Ascending aorta (tissue), 2 donors: ENCODE measurements at regions of chr15 and their contacts with region 1.

Region 1: GRCh38 chr15:58749532-58750337 is at the start of gene ADAM10:
- DNase-seq: peak; percentile 97 to 99
- H3K4me3 ChIP-seq: peak within 1 kb of the TSS; percentile 94 to 97
- H3K27ac ChIP-seq: peak within 1 kb of the TSS; percentile 98
- H3K4me1 ChIP-seq: peaks cover 0 to 13% of the 10 kb centered on the region in 2 donors
- H3K27me3 ChIP-seq: no peaks in the 10 kb centered on the region
- CTCF ChIP-seq: no peak
- total RNA-seq, gene ADAM10: 44.6 TPM

Region 2: GRCh38 chr15:57706405-57707209 is 1043.1 kb before region 1 on chr15 and contains the start of gene POLR2M:
- intact Hi-C with region 1: loop called (anchors 10 kb)
- DNase-seq: peak; percentile 89 to 99
- H3K4me3 ChIP-seq: peak within 1 kb of the TSS; percentile 77 to 87
- H3K27ac ChIP-seq: peak within 1 kb of the TSS; percentile 96 to 97
- H3K4me1 ChIP-seq: peaks cover 0 to 26% of the 10 kb centered on the region in 2 donors
- H3K27me3 ChIP-seq: no peaks in the 10 kb centered on the region
- CTCF ChIP-seq: no peak
- total RNA-seq, gene POLR2M: 24.9 TPM

Region 3: GRCh38 chr15:58331903-58332675 is 417.6 kb before region 1 on chr15:
- intact Hi-C with region 1: loop called (anchors 1 kb)
- DNase-seq: peak; percentile 91 to 98
- H3K4me3 ChIP-seq: peak overlapping the region in 1 of 2 donors; percentile 27
- H3K27ac ChIP-seq: peak overlapping the region; percentile 84 to 86
- H3K4me1 ChIP-seq: peaks cover 9 to 29% of the 10 kb centered on the region in 2 donors
- H3K27me3 ChIP-seq: no peaks in the 10 kb centered on the region
- CTCF ChIP-seq: no peak

Region 4: DNA sequence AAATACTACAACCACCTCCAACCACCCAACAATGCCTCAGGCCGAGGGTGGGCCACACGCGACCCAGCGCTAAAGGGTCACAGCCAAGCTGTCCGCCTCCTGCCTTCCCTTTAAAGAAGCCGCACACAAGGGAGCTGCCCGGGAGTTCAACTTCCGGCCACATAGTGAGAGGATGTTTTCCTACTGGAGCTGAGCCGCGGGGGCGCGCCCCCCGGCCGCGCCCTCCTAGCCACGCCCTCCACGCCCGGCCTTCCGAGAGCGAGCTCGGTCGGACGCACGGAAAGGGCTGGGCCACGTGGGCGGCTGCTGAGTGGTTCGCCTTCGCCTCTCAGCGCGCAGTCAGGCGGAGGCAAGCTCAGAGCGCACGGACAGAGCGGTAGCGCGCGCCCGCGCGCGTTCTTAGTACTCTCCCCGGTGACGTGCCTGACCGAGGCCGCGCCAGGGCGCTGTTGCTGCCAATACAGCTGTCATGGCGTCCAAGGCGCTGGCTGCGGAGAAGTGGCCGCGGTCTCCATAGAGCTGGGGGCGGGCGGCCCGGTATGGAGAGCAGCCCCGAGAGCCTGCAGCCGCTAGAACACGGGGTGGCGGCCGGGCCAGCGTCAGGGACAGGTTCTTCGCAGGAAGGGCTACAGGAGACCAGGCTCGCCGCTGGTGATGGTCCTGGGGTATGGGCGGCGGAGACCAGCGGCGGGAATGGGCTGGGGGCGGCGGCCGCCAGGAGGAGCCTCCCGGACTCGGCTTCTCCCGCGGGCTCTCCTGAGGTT is 21.3 kb after region 1 on chr15 and contains the start of gene MINDY2:
- intact Hi-C with region 1: loop called (anchors 1 kb)
- DNase-seq: peak; percentile 93 to 99
- H3K4me3 ChIP-seq: peak within 1 kb of the TSS; percentile 70 to 96
- H3K27ac ChIP-seq: peak within 1 kb of the TSS; percentile 92 to 99
- H3K4me1 ChIP-seq: peaks cover 3 to 25% of the 10 kb centered on the region in 2 donors
- H3K27me3 ChIP-seq: no peaks in the 10 kb centered on the region
- CTCF ChIP-seq: peak in 2 of 3 experiments; percentile 29 to 31
- total RNA-seq, gene MINDY2: 10.4 TPM

Region 5: GRCh38 chr15:58951388-58952007 is 201.8 kb after region 1 on chr15:
- intact Hi-C with region 1: no loop called
- DNase-seq: no peak
- H3K4me3 ChIP-seq: no peak overlapping the region
- H3K27ac ChIP-seq: no peak overlapping the region
- H3K4me1 ChIP-seq: peaks cover 0 to 2% of the 10 kb centered on the region in 2 donors
- H3K27me3 ChIP-seq: no peaks in the 10 kb centered on the region
- CTCF ChIP-seq: no peak

Region 6: GRCh38 chr15:59148153-59148833 is 398.6 kb after region 1 on chr15:
- intact Hi-C with region 1: no loop called
- DNase-seq: no peak
- H3K4me3 ChIP-seq: no peak overlapping the region
- H3K27ac ChIP-seq: peak overlapping the region; percentile 12 to 40
- H3K4me1 ChIP-seq: peaks cover 7 to 13% of the 10 kb centered on the region in 2 donors
- H3K27me3 ChIP-seq: no peaks in the 10 kb centered on the region
- CTCF ChIP-seq: no peak

Region 7: GRCh38 chr15:59313641-59314332 is 564.1 kb after region 1 on chr15:
- intact Hi-C with region 1: loop called (anchors 10 kb)
- DNase-seq: peak; percentile 87 to 96
- H3K4me3 ChIP-seq: no peak overlapping the region
- H3K27ac ChIP-seq: peak overlapping the region; percentile 77 to 83
- H3K4me1 ChIP-seq: peaks cover 29 to 50% of the 10 kb centered on the region in 2 donors
- H3K27me3 ChIP-seq: no peaks in the 10 kb centered on the region
- CTCF ChIP-seq: no peak